ENCODE measurements at regions of chr1 and their contacts with region 1.

Region 1: DNA sequence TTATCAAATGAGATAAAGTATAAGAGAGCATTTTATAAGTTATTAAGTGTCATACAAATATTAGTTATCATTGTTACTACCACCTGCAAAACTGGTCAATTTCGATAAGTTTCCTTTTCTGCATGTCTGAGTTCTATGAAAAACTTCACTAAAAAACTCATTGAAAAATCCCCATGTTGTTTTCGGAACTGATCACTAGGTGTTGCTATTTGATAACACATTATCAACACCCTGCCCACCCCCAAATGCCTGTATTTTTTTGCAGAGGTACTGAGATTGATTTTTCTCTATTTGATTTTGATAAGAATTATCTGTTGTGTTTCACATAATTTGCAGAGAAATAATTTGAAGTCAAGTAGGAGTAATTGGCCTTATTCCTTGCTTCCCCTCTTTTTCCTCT is 22.1 kb upstream of the DISP1 start:
- DNase-seq: peak in 1 of 4 donors; percentile 18
- ATAC-seq: no peak
- H3K4me3 ChIP-seq: no peak overlapping the region
- H3K27ac ChIP-seq: no peak overlapping the region
- H3K4me1 ChIP-seq: no peaks in the 10 kb centered on the region
- H3K27me3 ChIP-seq: no peaks in the 10 kb centered on the region
- CTCF ChIP-seq: peak; percentile 24 to 79 (median 75)
- POLR2A ChIP-seq: no peak

Region 2: GRCh38 chr1:223081181-223081994 is 288.6 kb after region 1 on chr1:
- intact Hi-C with region 1: loop called (anchors 5 kb)
- DNase-seq: peak; percentile 88 to 94 (median 89)
- ATAC-seq: peak; percentile 97
- H3K4me3 ChIP-seq: no peak overlapping the region
- H3K27ac ChIP-seq: peak overlapping the region in 3 of 4 donors; percentile 43 to 72 (median 58)
- H3K4me1 ChIP-seq: peaks cover 14% of the 10 kb centered on the region
- H3K27me3 ChIP-seq: no peaks in the 10 kb centered on the region
- CTCF ChIP-seq: peak; percentile 89 to 98 (median 95)
- POLR2A ChIP-seq: peak in 2 of 3 donors; percentile 41 to 45

Region 3: GRCh38 chr1:223129229-223129901 is 336.6 kb after region 1 on chr1:
- intact Hi-C with region 1: loop called (anchors 10 kb)
- DNase-seq: peak; percentile 71 to 79 (median 77)
- ATAC-seq: peak; percentile 60
- H3K4me3 ChIP-seq: no peak overlapping the region
- H3K27ac ChIP-seq: no peak overlapping the region
- H3K4me1 ChIP-seq: peaks cover 17% of the 10 kb centered on the region
- H3K27me3 ChIP-seq: no peaks in the 10 kb centered on the region
- CTCF ChIP-seq: peak; percentile 69 to 85 (median 76)
- POLR2A ChIP-seq: no peak